Endothelial cell of umbilical vein (primary cell): ENCODE measurements at regions of chr3 and their contacts with region 1.

Region 1: DNA sequence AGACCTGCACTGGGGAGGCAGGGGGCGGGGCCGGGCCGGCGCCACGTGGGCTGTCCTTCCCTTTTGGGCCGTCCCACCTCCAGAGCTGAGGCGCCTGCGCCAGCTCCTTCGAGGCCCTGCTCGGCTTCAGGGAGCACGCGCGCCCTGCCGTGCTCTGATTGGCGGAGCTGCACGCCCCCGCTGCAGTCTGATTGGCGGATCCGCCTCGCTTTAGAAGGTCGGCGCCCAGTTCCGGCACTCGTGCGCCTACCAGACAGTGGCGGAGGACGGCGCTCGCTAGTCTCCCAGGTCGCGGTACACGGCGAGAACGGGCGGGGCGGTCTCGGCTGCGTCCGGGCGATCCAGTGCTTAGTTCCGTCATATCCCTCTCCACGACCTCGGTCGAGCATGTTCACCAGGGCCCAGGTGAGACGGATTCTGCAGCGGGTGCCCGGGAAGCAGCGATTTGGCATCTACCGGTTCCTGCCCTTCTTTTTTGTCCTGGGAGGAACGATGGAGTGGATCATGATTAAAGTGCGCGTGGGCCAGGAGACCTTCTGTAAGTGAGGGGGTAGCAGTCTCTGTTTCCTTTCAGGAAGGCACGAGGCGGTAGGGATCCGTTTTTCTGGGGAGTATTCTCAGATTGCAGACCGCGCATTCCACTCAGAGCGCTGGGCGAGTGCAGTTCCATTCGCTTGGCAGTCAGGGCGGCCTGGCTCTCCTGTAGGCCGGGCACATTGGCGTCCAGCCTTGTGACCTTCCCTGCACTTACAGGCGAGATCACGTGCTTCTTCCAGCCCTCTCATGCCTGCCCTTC is at the start of gene UQCC5:
- DNase-seq: peak; percentile 100
- H3K4me3 ChIP-seq: peak within 1 kb of the TSS; percentile 37 to 74 (median 48)
- H3K27ac ChIP-seq: peak within 1 kb of the TSS; percentile 57
- H3K4me1 ChIP-seq: peaks cover 45% of the 10 kb centered on the region
- H3K27me3 ChIP-seq: no peaks in the 10 kb centered on the region
- CTCF ChIP-seq: peak in 1 of 2 donors; percentile 4
- POLR2A ChIP-seq: peak; percentile 99
- total RNA-seq, gene UQCC5: 22.6 and 34.6 TPM in 2 replicates

Region 2: GRCh38 chr3:52471371-52472238 is 65.0 kb before region 1 on chr3:
- CTCF ChIA-PET with region 1: interaction called, 6 read pairs
- POLR2A ChIA-PET with region 1: no interaction called
- dilution Hi-C with region 1: no loop called
- intact Hi-C with region 1: loop called (anchors 1 kb)
- DNase-seq: peak; percentile 74
- H3K4me3 ChIP-seq: no peak overlapping the region
- H3K27ac ChIP-seq: no peak overlapping the region
- H3K4me1 ChIP-seq: no peaks in the 10 kb centered on the region
- H3K27me3 ChIP-seq: no peaks in the 10 kb centered on the region
- CTCF ChIP-seq: peak; percentile 75 to 86
- POLR2A ChIP-seq: no peak